Cardiac septum (tissue), 1 donor: ENCODE measurements at regions of chr3 and their contacts with region 1.

Region 1: DNA sequence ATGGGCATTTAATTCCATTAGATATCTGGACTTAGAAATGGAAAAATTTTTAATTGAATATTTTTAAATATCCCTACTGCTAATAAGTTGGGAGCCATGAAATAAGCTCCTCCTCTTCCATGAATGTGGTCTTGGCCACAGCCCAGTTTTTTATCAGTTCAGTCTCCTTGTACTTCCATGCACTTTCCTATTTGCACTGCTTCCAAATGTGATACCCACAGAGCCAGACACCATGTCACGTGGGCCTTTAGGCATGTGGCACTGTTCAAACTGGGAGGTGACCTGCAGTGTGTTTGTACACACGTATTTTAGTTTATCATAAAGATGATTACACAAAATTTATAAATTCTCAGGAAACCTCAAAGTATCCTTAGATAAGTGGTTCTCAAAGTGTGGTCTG is 80.1 kb upstream of the DGKG start:
- DNase-seq: no peak

Region 2: GRCh38 chr3:186381424-186382216 is 60.5 kb before region 1 on chr3:
- intact Hi-C with region 1: loop called (anchors 5 kb)
- DNase-seq: no peak